GM10248 (cell line): ENCODE measurements at regions of chr3 and their contacts with region 1.

Region 1: DNA sequence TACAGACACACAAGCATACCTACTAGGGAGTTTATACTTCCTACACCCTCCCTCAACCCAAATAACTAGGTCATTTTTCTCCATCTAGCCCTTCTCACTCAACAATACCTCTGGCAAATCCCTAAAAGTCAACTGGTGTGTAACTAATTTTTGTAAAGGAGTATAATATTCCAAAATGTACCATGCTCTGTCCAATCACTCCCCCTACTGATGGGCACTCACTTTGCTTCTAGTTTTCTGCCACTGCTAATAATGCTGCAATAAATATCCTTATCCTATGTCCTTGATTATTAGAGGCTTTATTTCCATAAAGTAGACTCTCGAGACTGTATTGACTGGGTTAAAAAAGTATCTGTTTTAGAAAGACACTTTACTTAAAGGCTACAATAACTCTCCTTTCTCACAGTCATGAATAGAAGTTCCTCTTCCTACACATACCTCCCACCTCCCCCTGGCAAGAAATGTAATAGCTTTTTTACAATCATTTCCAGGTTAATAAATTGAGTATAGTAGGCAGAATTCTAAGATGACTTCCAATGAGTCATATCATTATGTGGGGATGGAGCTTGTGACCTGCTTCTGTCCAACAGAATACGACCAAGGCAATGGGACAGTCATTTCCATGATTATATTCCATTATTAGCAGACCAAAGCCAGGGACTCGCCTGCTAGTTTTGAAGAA is 30.0 kb downstream of the SHQ1 start:
- DNase-seq: no peak
- CTCF ChIP-seq: peak; percentile 73

Region 2: DNA sequence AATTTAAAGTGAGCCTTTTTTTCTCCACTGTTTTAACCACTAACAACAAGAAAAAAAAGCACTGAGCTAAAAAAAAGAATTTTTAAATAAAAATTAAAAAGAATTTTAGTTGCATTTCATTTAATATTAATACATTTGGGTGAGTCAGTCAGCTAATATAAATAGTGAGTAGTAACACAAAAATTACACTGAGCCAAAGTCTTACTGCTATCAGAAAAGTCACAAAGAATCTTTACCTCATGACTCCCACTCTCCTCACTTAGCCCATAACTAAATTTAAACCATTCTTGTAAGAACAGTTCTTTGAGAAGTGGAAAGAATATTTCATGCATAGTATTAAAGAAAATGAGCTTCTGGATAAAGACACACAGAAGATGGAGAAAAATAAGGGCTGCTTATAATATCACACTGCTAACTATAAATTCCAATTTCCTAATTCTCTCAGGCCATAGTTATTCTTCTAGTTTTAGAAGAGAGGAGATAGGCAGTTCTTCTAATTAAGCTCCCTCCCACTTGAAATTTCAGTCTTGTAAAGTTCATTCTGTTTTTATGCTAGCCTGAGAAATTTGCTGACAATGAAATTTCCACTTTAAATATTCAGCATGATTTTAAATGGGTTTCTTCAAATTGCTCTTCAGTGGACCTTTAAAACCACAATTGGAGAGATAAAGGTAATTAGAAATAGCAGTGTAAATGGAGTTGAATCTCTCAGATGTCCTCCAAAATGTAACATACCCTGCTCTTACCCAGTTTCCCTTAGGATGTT is 12.4 kb after region 1 on chr3:
- CTCF ChIA-PET with region 1: interaction called, 11 read pairs
- POLR2A ChIA-PET with region 1: no interaction called
- DNase-seq: no peak
- CTCF ChIP-seq: no peak